H1 (cell line): ENCODE measurements at regions of chr11 and their contacts with region 1.

Region 1: DNA sequence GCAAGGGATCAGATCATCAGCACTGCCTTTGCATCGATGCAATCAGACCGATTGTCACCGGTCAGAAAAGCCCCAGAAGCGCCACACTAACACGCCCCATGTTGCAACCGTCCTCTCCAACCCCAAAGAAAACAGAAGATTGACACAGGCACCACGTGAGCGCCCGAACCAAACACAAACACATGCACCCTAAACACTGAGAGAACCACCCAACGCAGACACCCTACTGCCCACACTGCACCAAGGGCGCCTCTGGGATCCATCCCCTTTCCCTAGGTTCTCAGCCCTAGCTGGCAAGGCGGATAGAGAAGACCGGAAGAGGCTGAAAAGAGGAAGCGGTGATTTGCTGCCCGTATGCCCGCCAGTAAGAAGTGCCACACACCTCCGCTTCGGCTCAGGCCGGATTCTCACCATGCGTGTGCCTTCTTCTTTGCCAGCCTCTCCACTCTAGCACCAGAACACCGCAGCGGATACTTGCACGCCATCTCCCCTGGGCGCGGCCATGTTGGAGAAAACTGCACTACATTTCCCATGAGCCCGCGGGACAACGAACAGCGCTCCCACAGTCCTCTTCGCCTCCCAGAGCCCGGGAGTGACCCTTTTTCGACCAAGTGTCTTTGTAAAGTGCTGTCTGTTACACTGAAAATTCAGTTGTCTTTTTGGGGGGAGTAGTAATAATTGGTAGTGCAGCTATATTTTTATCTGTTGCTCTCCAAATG is at the start of gene ALKBH8:
- DNase-seq: peak in 1 of 2 experiments; percentile 81
- H3K4me3 ChIP-seq: peak within 1 kb of the TSS; percentile 88 to 99 (median 94)
- H3K27ac ChIP-seq: peak within 1 kb of the TSS; percentile 82
- H3K4me1 ChIP-seq: peaks cover 0 to 6% (median 1%) of the 10 kb centered on the region in 4 experiments; a peak in 3 of 7 replicates
- H3K27me3 ChIP-seq: no peaks in the 10 kb centered on the region
- CTCF ChIP-seq: no peak
- EP300 ChIP-seq: no peak
- POLR2A ChIP-seq: peak in 1 of 2 experiments; percentile 84; a peak in 2 of 3 replicates
- RAD21 ChIP-seq: no peak
- total RNA-seq, gene ALKBH8: 11.9 and 13.0 TPM in 2 replicates

Region 2: GRCh38 chr11:107549253-107549953 is 16.0 kb before region 1 on chr11:
- CTCF ChIA-PET with region 1: interaction called, 16 read pairs
- POLR2A ChIA-PET with region 1: no interaction called
- DNase-seq: no peak
- H3K4me3 ChIP-seq: no peak overlapping the region
- H3K27ac ChIP-seq: no peak overlapping the region
- H3K4me1 ChIP-seq: no peaks in the 10 kb centered on the region
- H3K27me3 ChIP-seq: no peaks in the 10 kb centered on the region
- CTCF ChIP-seq: peak in 2 of 3 experiments; percentile 60 to 71; a peak in 3 of 4 replicates
- EP300 ChIP-seq: no peak
- POLR2A ChIP-seq: no peak
- RAD21 ChIP-seq: peak; percentile 78 to 82

Region 3: DNA sequence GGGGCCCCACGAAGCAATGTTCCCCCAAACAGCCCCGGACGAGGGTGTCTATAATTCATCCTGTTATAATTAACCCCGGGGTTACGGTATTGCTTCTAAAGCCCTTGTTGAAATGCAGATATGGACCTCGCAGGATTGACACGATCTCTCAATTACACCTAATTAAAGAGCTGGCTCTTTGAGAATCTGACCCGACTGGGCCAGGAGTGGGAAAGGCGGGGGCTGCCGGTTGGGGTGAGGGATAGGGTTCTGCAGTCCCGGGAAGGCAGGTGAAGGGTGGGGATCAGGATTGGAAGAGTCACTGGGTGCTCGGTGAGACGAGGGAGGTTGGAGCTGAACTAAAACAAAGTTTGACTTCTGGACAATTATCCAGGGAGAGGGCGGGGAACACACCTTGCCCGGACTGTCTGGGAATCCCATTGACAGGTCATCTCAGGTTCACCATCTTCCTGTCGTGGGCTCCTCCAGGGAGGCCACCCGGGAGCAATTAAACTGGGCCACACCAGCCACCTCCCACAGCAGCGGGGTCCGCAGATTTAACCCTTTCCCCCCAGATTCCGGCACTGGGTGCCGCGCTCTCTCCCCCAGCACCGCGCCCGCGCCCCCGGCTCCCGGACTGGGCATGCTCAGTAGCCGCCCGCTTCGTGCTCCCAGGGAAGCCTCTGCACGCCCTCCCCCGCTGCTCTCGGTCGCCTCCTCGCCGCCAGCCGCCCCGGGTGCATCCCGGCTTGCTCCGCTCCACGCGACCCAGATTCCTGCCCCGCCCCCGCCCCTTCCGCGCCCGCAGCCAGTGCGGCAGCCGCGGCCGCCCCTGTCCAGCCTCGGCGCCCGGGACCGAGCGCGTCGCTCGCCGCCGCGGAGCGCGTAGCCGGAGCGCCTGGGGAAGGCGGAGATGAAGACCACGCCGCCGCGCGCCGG is 25.3 kb after region 1 on chr11 and contains the start of gene ELMOD1:
- CTCF ChIA-PET with region 1: interaction called, 17 read pairs
- POLR2A ChIA-PET with region 1: no interaction called
- DNase-seq: peak in 1 of 2 experiments; percentile 76
- H3K4me3 ChIP-seq: peak within 1 kb of the TSS; percentile 84 to 87 (median 85)
- H3K27ac ChIP-seq: no peak within 1 kb of the TSS
- H3K4me1 ChIP-seq: peaks cover 0 to 16% (median 10%) of the 10 kb centered on the region in 4 experiments; a peak in 6 of 7 replicates
- H3K27me3 ChIP-seq: peaks cover 17 to 57% (median 46%) of the 10 kb centered on the region in 4 experiments
- CTCF ChIP-seq: no peak
- EP300 ChIP-seq: no peak
- POLR2A ChIP-seq: no peak
- RAD21 ChIP-seq: no peak
- total RNA-seq, gene ELMOD1: 1.6 and 1.7 TPM in 2 replicates

Region 4: GRCh38 chr11:107598225-107599139 is 33.1 kb after region 1 on chr11:
- CTCF ChIA-PET with region 1: interaction called, 25 read pairs
- POLR2A ChIA-PET with region 1: no interaction called
- DNase-seq: peak in 1 of 2 experiments; percentile 69
- H3K4me3 ChIP-seq: no peak overlapping the region
- H3K27ac ChIP-seq: no peak overlapping the region
- H3K4me1 ChIP-seq: peaks cover 0 to 9% (median 4%) of the 10 kb centered on the region in 4 experiments; a peak in 4 of 7 replicates
- H3K27me3 ChIP-seq: peaks cover 0 to 6% (median 4%) of the 10 kb centered on the region in 4 experiments; a peak in 3 of 7 replicates
- CTCF ChIP-seq: peak; percentile 76 to 79 (median 77)
- EP300 ChIP-seq: no peak
- POLR2A ChIP-seq: no peak
- RAD21 ChIP-seq: peak; percentile 70 to 80

Region 5: GRCh38 chr11:107606141-107606540 is 40.8 kb after region 1 on chr11:
- CTCF ChIA-PET with region 1: interaction called, 25 read pairs
- POLR2A ChIA-PET with region 1: no interaction called
- DNase-seq: no peak
- H3K4me3 ChIP-seq: no peak overlapping the region
- H3K27ac ChIP-seq: no peak overlapping the region
- H3K4me1 ChIP-seq: peaks cover 0 to 3% (median 0%) of the 10 kb centered on the region in 4 experiments; a peak in 2 of 7 replicates
- H3K27me3 ChIP-seq: peaks cover 0 to 5% (median under 1%) of the 10 kb centered on the region in 4 experiments; a peak in 2 of 7 replicates
- CTCF ChIP-seq: peak; percentile 29 to 55 (median 42); a peak in 3 of 4 replicates
- EP300 ChIP-seq: no peak
- POLR2A ChIP-seq: no peak
- RAD21 ChIP-seq: peak; percentile 5 to 11; a peak in 1 of 4 replicates

Region 6: GRCh38 chr11:107665018-107665417 is 99.6 kb after region 1 on chr11:
- CTCF ChIA-PET with region 1: interaction called, 12 read pairs
- POLR2A ChIA-PET with region 1: no interaction called
- DNase-seq: no peak
- H3K4me3 ChIP-seq: no peak overlapping the region
- H3K27ac ChIP-seq: no peak overlapping the region
- H3K4me1 ChIP-seq: peaks cover 0 to 10% (median 4%) of the 10 kb centered on the region in 4 experiments; a peak in 4 of 7 replicates
- H3K27me3 ChIP-seq: no peaks in the 10 kb centered on the region
- CTCF ChIP-seq: no peak
- EP300 ChIP-seq: no peak
- POLR2A ChIP-seq: no peak
- RAD21 ChIP-seq: no peak

Region 7: DNA sequence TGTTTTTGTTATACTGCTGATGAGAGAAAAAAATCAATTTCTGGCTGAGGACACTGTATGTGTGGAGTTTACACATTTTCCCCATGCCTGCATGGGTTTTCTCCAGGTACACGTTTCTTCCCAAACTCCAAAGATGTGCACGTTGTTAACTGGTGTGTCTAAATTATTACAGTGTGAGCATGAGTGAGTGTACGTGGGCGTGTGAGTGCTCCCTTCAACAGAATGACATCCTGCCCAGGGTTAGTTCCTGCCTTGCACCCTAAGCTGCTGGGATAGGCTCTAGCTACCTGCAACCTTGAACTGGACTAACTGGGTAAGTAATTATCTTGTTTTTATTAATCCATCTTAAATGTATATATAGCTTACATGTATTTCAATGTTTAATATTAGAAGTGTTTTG is 651.6 kb after region 1 on chr11:
- CTCF ChIA-PET with region 1: no interaction called
- POLR2A ChIA-PET with region 1: no interaction called
- DNase-seq: no peak
- H3K4me3 ChIP-seq: no peak overlapping the region
- H3K27ac ChIP-seq: no peak overlapping the region
- H3K4me1 ChIP-seq: peaks cover 2 to 5% (median 4%) of the 10 kb centered on the region in 4 experiments; a peak in 5 of 7 replicates
- H3K27me3 ChIP-seq: no peaks in the 10 kb centered on the region
- CTCF ChIP-seq: no peak
- EP300 ChIP-seq: no peak
- POLR2A ChIP-seq: no peak
- RAD21 ChIP-seq: no peak